ENCODE measurements at regions of chr19 and their contacts with region 1.

Region 1: DNA sequence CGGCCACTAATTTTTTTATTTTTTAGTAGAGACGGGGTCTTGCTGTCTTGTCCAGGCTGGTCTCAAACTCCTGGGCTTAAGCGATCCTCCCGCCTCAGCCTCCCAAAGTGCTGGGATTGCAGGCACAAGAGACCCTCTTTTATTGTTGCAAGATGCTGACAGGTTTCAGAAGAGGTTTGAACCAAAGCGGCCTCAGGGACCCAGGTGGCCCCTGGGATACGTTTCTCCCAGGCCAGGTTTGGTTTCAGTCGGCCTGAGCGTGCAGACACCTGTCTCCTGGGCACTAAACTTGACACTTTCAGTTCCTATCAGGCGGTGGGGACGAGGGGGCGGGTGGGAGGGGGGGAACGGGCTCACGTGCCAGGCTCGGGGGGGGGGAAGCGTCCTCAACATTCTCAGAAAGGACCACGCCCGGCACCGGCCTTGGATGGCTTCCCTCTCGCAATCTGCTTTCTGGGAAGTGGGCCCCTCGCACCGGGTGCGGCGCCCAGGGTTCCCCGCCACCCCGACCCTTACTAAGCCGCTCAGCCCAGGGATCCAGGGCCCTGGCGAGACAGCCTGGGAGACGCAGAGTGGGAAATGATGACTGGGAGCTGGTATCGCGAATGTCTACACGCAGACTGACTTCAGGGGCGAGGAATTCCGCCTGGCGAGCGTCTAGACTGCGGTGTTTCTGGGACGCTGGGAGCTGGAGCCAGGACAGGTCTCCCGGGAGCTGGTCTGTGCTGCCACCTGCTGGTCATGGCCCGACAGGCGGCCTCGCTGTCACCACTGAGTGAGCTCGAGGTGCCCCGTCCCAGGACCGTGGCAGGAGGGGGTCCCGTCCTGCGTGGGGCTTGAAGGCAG is 91.6 kb downstream of the GNG7 start:
- DNase-seq: peak; percentile 96
- ATAC-seq: peak; percentile 67
- H3K4me3 Mint-ChIP-seq: peak overlapping the region; percentile 71
- H3K27ac Mint-ChIP-seq: peak overlapping the region; percentile 83
- H3K4me1 Mint-ChIP-seq: peaks cover 53% of the 10 kb centered on the region
- H3K27me3 Mint-ChIP-seq: peaks cover 5% of the 10 kb centered on the region

Region 2: DNA sequence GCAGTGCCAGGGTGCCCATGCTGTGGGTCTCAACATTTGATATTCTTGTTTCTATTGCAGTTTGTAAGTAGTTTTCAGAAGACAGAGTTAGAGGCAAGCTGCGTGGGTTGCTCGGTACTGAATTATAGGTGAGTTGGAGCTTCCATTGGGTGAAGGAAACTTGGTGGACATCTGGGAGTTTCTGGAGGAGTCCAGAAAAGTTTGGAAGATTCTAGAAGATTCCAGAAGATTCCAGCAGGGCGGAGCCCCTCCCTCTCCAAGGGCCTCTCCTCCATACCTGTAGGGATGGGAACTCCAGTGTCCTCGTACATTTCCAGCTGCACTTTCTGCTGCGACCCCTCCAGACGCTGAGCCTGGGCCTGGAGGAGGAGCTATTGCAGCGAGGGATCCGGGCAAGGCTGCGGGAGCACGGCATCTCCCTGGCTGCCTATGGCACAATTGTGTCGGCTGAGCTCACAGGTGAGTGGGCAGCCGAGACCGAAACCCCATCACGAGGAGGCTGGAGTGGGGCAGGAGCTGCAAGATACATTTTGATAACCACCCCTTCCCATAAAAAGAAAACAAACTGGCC is 212.0 kb before region 1 on chr19:
- CTCF ChIA-PET with region 1: no interaction called
- POLR2A ChIA-PET with region 1: no interaction called
- intact Hi-C with region 1: no loop called
- DNase-seq: no peak
- ATAC-seq: no peak
- H3K4me3 Mint-ChIP-seq: no peak overlapping the region
- H3K27ac Mint-ChIP-seq: no peak overlapping the region
- H3K4me1 Mint-ChIP-seq: no peaks in the 10 kb centered on the region
- H3K27me3 Mint-ChIP-seq: no peaks in the 10 kb centered on the region

Region 3: GRCh38 chr19:2561895-2562294 is 49.0 kb before region 1 on chr19:
- CTCF ChIA-PET with region 1: interaction called, 4 read pairs
- POLR2A ChIA-PET with region 1: no interaction called
- intact Hi-C with region 1: loop called in 1 of 2 experiments (anchors 5 kb)
- DNase-seq: peak; percentile 88
- ATAC-seq: peak; percentile 92
- H3K4me3 Mint-ChIP-seq: peak overlapping the region; percentile 69
- H3K27ac Mint-ChIP-seq: peak overlapping the region; percentile 85
- H3K4me1 Mint-ChIP-seq: peaks cover 23% of the 10 kb centered on the region
- H3K27me3 Mint-ChIP-seq: peaks cover 2% of the 10 kb centered on the region

Region 4: GRCh38 chr19:2627319-2627829 is 16.5 kb after region 1 on chr19:
- CTCF ChIA-PET with region 1: interaction called, 17 read pairs
- POLR2A ChIA-PET with region 1: interaction called, 3 read pairs
- intact Hi-C with region 1: no loop called
- DNase-seq: peak; percentile 84
- ATAC-seq: peak; percentile 97
- H3K4me3 Mint-ChIP-seq: peak overlapping the region; percentile 38
- H3K27ac Mint-ChIP-seq: peak overlapping the region; percentile 81
- H3K4me1 Mint-ChIP-seq: peaks cover 39% of the 10 kb centered on the region
- H3K27me3 Mint-ChIP-seq: no peaks in the 10 kb centered on the region

Region 5: DNA sequence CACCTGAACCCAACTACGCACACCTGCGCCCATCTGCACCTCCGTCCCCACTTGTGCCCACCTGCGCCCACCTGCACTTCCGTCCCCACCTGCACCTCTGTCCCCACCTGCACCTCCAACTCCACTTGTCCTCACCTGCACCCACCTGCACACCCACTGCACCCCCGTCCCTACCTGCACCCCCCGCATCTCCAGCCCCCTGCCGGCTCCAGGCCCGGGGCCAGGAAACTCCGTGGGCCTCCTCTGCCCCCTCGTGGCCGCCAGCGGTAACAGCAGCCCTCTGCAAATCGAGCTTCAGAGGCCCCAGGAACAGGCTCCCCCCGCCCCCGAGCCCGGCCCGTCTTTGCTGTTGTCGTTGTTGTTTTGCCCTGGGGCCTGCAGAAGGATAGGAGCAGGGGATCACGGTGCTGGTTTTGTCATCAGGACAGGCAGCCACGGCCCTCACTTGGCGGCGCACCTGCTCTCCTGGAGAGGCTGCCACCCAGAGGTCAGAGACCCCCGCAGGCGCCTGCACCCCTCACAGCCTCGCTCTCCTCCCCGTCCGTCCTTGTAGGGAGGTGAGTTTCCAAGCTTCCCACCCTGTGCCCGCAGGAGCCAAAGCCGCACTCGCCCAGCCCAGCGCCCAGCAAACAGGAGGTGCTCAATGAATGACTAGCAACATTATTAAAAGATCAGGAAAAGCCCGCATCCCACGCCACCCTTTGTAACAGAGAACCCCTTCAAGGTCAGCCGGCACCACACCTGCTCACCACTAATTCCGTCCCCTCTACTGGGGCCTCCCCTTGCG is 26.2 kb after region 1 on chr19:
- CTCF ChIA-PET with region 1: interaction called, 10 read pairs
- POLR2A ChIA-PET with region 1: no interaction called
- intact Hi-C with region 1: loop called (anchors 1 to 2 kb)
- DNase-seq: peak; percentile 87
- ATAC-seq: peak; percentile 81
- H3K4me3 Mint-ChIP-seq: no peak overlapping the region
- H3K27ac Mint-ChIP-seq: no peak overlapping the region
- H3K4me1 Mint-ChIP-seq: peaks cover 12% of the 10 kb centered on the region
- H3K27me3 Mint-ChIP-seq: peaks cover 4% of the 10 kb centered on the region

Region 6: GRCh38 chr19:2711172-2711874 is 100.5 kb after region 1 on chr19:
- CTCF ChIA-PET with region 1: no interaction called
- POLR2A ChIA-PET with region 1: no interaction called
- intact Hi-C with region 1: no loop called
- DNase-seq: no peak
- ATAC-seq: no peak
- H3K4me3 Mint-ChIP-seq: no peak overlapping the region
- H3K27ac Mint-ChIP-seq: no peak overlapping the region
- H3K4me1 Mint-ChIP-seq: peaks cover 2% of the 10 kb centered on the region
- H3K27me3 Mint-ChIP-seq: peaks cover 3% of the 10 kb centered on the region

Measured in activated CD4-positive, alpha-beta T cell treated with anti-CD3 and anti-CD28 coated beads for 36 hours (primary cell).